ENCODE measurements at regions of chr11 and their contacts with region 1.

Region 1: GRCh38 chr11:73242251-73243079 is 24.4 kb downstream of the P2RY2 start:
- DNase-seq: peak; percentile 94
- H3K4me3 ChIP-seq: peak overlapping the region in 1 of 8 donors; percentile 46
- H3K27ac ChIP-seq: peak overlapping the region in 5 of 8 donors; percentile 12 to 61 (median 27)
- H3K4me1 ChIP-seq: peaks cover 8 to 86% (median 47%) of the 10 kb centered on the region in 6 donors
- H3K27me3 ChIP-seq: no peaks in the 10 kb centered on the region
- CTCF ChIP-seq: peak; percentile 75 to 96 (median 90)
- POLR2A ChIP-seq: no peak

Region 2: DNA sequence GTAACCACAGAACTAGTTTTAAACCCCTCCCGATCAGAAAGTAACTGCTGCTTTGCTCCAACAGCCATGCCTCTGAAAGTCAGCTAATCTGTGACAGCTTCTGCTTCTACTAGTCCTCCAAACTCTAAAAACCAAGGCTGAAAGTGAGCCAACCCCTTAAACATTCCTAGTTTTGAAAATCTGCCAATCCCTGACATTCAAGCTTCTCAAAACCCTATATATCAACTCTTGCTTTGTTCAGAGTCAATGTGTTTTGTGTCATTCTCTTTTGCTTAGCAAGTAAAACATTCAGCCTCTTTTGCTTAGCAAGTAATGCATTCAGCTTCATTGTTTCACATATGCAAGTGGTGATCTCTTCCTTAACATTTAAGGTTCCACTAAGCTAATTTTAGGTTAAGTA is 371.3 kb before region 1 on chr11:
- intact Hi-C with region 1: no loop called
- DNase-seq: no peak
- H3K4me3 ChIP-seq: no peak overlapping the region
- H3K27ac ChIP-seq: peak overlapping the region in 1 of 8 donors; percentile 3
- H3K4me1 ChIP-seq: peaks cover 0 to 30% (median 10%) of the 10 kb centered on the region in 6 donors
- H3K27me3 ChIP-seq: no peaks in the 10 kb centered on the region
- CTCF ChIP-seq: no peak
- POLR2A ChIP-seq: no peak

Region 3: DNA sequence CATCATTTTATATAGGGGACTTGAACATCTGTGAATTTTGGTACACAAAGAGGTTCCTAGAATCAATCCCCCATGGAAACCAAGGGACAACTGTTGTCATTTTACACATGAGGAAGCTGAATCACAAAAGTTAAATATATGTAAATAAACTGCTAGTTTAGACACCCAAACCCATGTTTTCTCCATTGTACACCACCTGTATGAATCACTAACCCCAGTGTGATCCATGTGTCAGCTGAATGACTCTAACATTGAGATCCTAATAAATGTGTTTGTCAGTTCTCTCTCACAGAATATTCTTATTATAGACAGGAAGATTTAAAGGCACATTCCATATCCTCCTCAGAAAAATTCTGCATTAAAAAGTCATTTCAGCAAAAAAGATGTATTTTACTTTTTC is 345.0 kb before region 1 on chr11:
- intact Hi-C with region 1: no loop called
- DNase-seq: no peak
- H3K4me3 ChIP-seq: no peak overlapping the region
- H3K27ac ChIP-seq: peak overlapping the region in 5 of 8 donors; percentile 8 to 53 (median 44)
- H3K4me1 ChIP-seq: peaks cover 0 to 6% (median 0%) of the 10 kb centered on the region in 6 donors
- H3K27me3 ChIP-seq: no peaks in the 10 kb centered on the region
- CTCF ChIP-seq: no peak
- POLR2A ChIP-seq: no peak

Region 4: DNA sequence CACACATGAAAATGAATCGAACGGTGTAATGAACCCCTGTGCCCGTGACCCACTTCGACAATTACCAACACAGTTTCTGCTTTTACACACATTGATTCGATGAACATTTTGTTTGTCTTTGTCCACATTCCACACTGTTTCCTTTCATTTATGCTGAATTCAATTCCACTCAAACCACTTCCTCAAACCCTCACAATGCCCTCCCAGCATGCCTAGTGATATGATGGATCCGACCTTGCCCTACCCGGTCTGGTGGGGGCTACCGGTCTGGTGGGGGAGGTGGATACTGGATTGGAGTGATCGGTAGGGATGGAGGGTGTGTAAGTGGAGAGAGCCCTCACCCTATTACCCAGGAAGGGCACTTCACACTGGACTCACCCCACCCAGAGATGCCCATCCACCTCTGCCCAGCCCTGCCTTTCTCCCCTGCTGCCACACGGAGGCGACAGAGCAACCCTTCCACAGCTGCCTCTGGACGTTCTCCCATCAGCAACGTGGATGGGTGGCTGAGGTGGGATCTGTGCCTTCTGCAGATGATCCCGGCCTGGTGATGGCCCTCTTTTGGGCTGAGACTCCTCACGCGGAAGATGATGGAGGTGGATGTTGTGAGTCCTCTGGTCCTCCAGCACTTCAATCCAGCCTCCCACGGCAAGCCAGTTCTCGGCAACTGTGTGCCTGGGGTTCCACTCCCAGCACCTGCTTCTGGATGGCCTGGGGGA is 57.4 kb before region 1 on chr11:
- intact Hi-C with region 1: loop called (anchors 5 kb)
- DNase-seq: peak; percentile 92
- H3K4me3 ChIP-seq: peak overlapping the region in 2 of 8 donors; percentile 15 to 59
- H3K27ac ChIP-seq: peak overlapping the region in 6 of 8 donors; percentile 15 to 70 (median 44)
- H3K4me1 ChIP-seq: peaks cover 14 to 71% (median 43%) of the 10 kb centered on the region in 6 donors
- H3K27me3 ChIP-seq: no peaks in the 10 kb centered on the region
- CTCF ChIP-seq: peak; percentile 88 to 97 (median 92)
- POLR2A ChIP-seq: no peak